Naive thymus-derived CD4-positive, alpha-beta T cell (primary cell): ENCODE measurements at regions of chr3 and their contacts with region 1.

Region 1: DNA sequence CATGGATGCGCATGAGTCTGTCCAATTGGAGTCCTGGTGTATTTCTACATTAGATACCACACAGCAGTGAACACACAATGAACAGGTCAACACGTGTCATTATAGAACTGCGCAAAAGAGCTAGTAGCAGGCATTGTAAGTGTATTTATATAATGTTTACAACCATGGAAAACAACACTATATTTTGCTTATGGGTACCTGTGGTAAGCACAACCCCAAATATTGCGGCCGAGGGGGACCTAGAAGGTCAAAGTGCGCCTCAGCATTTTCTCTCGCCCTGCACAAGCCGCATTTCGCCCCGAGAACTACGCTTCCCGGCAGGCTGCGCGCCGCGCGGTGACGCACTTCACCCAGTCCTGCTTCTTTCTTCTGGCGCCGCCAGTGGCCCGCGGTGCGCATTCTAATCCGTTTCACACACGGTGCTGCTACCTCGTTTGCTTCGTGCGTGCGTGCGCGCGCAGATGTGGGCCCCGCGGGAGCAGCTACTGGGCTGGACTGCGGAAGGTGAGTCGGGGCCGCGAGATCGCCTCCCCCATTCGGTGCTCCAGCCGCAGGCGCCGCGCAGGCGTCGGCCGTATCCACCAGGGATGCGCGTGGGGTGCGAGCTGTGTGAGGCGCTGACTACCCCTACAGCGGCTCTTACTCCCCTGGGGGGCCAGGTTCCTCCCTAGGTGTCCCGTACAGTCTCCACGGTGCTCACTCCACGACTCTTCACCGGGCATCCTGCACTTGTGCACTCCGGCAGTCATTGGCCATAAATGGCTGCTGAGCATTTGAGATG is at the start of gene ZNF589:
- DNase-seq: peak; percentile 87 to 96 (median 92)
- ATAC-seq: peak; percentile 99
- H3K4me3 ChIP-seq: peak within 1 kb of the TSS; percentile 92
- H3K4me3 Mint-ChIP-seq: peak within 1 kb of the TSS; percentile 82 to 94 (median 92)
- H3K27ac ChIP-seq: peak within 1 kb of the TSS; percentile 79
- H3K27ac Mint-ChIP-seq: peak within 1 kb of the TSS; percentile 88 to 96 (median 93)
- H3K4me1 ChIP-seq: peaks cover 7 to 14% of the 10 kb centered on the region in 2 donors
- H3K4me1 Mint-ChIP-seq: peaks cover 5 to 36% (median 25%) of the 10 kb centered on the region in 7 donors
- H3K27me3 ChIP-seq: no peaks in the 10 kb centered on the region
- H3K27me3 Mint-ChIP-seq: no peaks in the 10 kb centered on the region
- total RNA-seq, gene ZNF589: 37.7 to 64.0 (median 40.2) TPM

Region 2: DNA sequence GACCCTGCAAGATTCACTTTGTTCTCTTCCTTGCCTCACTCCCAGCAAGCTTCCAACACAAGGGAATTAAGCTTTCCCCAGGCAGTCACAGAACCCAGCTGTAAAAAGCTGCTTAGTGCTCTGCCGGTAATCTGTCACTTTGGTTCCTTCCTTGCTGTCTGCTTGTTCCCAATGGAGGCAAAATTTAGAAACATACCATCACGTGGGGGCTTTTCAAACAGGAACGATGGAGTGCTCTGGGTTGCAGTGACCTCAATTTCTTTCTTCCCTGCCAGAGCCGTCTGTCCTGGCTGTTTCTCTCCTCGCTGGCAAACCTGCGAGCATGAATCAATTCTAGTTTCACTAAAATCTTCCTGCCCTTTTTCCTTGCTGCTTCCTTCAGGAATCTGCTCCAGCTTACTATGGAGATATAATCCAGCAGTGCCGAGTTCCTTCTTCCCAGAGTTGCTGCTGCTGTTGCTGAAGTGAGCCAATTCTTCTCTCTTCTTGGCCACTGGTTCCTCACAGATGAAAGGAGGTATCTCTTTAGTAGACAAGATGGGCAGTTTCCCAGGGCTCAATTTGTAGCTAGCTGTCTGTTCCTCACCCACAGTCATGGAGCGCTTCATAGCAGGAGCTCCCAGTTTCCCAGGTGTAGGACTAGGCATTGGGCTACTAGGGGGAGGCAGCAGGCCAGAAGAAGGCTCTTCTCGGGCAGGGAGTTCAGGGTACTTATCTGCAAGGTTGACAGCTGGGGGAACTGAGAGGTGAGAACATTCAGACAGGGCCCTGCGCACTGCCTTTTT is 349.9 kb before region 1 on chr3:
- CTCF ChIA-PET with region 1: no interaction called
- POLR2A ChIA-PET with region 1: no interaction called
- intact Hi-C with region 1: no loop called
- DNase-seq: no peak
- ATAC-seq: no peak
- H3K4me3 ChIP-seq: no peak overlapping the region
- H3K4me3 Mint-ChIP-seq: no peak overlapping the region
- H3K27ac ChIP-seq: no peak overlapping the region
- H3K27ac Mint-ChIP-seq: no peak overlapping the region
- H3K4me1 ChIP-seq: no peaks in the 10 kb centered on the region
- H3K4me1 Mint-ChIP-seq: peaks cover 0 to 17% (median 0%) of the 10 kb centered on the region in 7 donors
- H3K27me3 ChIP-seq: no peaks in the 10 kb centered on the region
- H3K27me3 Mint-ChIP-seq: no peaks in the 10 kb centered on the region

Region 3: GRCh38 chr3:48268381-48269183 is 27.7 kb after region 1 on chr3:
- CTCF ChIA-PET with region 1: interaction called, 4 read pairs
- POLR2A ChIA-PET with region 1: interaction called, 32 read pairs
- intact Hi-C with region 1: loop called (anchors 1 kb)
- DNase-seq: peak; percentile 25 to 92 (median 80)
- ATAC-seq: peak; percentile 97
- H3K4me3 ChIP-seq: peak overlapping the region; percentile 40
- H3K4me3 Mint-ChIP-seq: peak overlapping the region; percentile 74 to 93 (median 82)
- H3K27ac ChIP-seq: peak overlapping the region; percentile 71
- H3K27ac Mint-ChIP-seq: peak overlapping the region; percentile 89 to 99 (median 93)
- H3K4me1 ChIP-seq: peaks cover 14 to 26% of the 10 kb centered on the region in 2 donors
- H3K4me1 Mint-ChIP-seq: peaks cover 17 to 40% (median 39%) of the 10 kb centered on the region in 7 donors
- H3K27me3 ChIP-seq: no peaks in the 10 kb centered on the region
- H3K27me3 Mint-ChIP-seq: no peaks in the 10 kb centered on the region

Region 4: GRCh38 chr3:48663415-48664312 is 422.8 kb after region 1 on chr3:
- CTCF ChIA-PET with region 1: no interaction called
- POLR2A ChIA-PET with region 1: no interaction called
- intact Hi-C with region 1: loop called in 1 of 2 experiments (anchors 10 kb)
- DNase-seq: peak; percentile 50 to 94 (median 61)
- ATAC-seq: peak; percentile 88
- H3K4me3 ChIP-seq: peak overlapping the region; percentile 70
- H3K4me3 Mint-ChIP-seq: peak overlapping the region; percentile 34 to 89 (median 70)
- H3K27ac ChIP-seq: no peak overlapping the region
- H3K27ac Mint-ChIP-seq: peak overlapping the region in 1 of 9 donors; percentile 91
- H3K4me1 ChIP-seq: peaks cover 12 to 15% of the 10 kb centered on the region in 2 donors
- H3K4me1 Mint-ChIP-seq: peaks cover 0 to 29% (median 15%) of the 10 kb centered on the region in 7 donors
- H3K27me3 ChIP-seq: peaks cover 0 to 15% of the 10 kb centered on the region in 2 donors
- H3K27me3 Mint-ChIP-seq: peaks cover 4 to 20% (median 13%) of the 10 kb centered on the region in 5 donors